A673 (cell line): ENCODE measurements at regions of chr10 and their contacts with region 1.

Region 1: GRCh38 chr10:106795619-106796018 is 368.9 kb downstream of the SORCS1 start:
- DNase-seq: peak; percentile 65
- H3K4me3 ChIP-seq: no peak overlapping the region
- H3K27ac ChIP-seq: no peak overlapping the region
- H3K4me1 ChIP-seq: no peaks in the 10 kb centered on the region
- H3K27me3 ChIP-seq: no peaks in the 10 kb centered on the region
- CTCF ChIP-seq: peak; percentile 78

Region 2: DNA sequence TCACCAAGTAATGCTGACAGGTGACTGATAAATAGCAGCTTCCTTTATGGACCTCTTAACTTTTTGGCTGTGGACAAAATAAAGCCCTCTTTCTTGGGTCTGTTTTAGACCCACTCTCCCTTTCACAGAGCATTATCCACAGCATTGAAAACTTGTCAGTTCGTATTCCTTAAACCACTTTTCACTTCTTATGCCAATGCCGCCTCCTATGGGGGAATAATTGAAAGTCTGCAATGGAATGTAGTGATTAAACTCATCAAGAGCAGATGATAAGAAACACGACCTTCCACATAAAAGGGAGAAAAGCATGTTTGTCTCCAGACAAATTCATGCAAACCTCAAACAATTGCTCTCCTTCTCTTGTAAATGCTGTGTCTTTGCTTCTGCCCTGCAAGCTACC is 215.5 kb after region 1 on chr10:
- CTCF ChIA-PET with region 1: no interaction called
- POLR2A ChIA-PET with region 1: no interaction called
- intact Hi-C with region 1: loop called (anchors 2 kb)
- DNase-seq: peak; percentile 57
- H3K4me3 ChIP-seq: no peak overlapping the region
- H3K27ac ChIP-seq: no peak overlapping the region
- H3K4me1 ChIP-seq: no peaks in the 10 kb centered on the region
- H3K27me3 ChIP-seq: no peaks in the 10 kb centered on the region
- CTCF ChIP-seq: peak; percentile 56

Region 3: DNA sequence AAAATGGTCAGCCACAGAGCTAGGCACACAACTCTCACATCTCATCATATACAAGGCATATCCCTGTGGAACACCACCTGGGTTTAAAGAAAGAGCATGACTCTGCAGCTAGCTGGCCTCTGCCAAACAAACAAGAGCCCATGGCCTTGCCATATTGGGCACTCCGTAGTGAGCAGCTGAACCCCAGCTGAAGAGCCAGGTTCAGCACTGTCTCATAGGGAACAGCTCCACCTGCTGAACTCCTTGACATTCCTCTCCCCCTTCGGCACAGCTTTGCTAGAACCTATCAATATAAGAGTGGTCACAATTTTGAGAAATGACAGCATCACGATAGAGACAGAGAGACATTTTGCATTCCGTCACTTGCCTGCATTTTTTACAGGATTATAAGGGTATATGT is 348.9 kb after region 1 on chr10:
- CTCF ChIA-PET with region 1: no interaction called
- POLR2A ChIA-PET with region 1: no interaction called
- intact Hi-C with region 1: loop called (anchors 5 kb)
- DNase-seq: peak; percentile 30
- H3K4me3 ChIP-seq: no peak overlapping the region
- H3K27ac ChIP-seq: no peak overlapping the region
- H3K4me1 ChIP-seq: no peaks in the 10 kb centered on the region
- H3K27me3 ChIP-seq: no peaks in the 10 kb centered on the region
- CTCF ChIP-seq: peak; percentile 34

Region 4: DNA sequence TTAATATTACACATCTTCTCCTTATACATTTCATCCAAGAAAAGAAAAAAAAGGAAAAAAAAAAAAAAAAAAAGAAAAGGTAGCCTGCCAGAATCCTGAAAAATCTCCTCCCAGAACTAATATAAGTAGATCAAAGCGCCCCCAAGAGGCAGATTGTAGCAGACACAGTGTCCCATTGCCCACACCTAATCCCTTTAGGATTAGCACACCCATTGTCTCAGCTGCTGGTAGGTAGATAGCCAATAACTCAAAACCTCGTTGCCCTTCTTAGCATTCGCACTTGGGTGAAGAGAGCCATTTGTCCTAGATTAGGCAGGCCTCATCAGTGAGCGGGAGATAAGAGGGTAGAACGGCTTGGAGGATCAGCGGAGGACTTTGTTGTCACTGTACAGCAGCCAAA is 469.1 kb after region 1 on chr10:
- CTCF ChIA-PET with region 1: interaction called, 3 read pairs
- POLR2A ChIA-PET with region 1: no interaction called
- intact Hi-C with region 1: loop called (anchors 10 kb)
- DNase-seq: peak; percentile 60
- H3K4me3 ChIP-seq: no peak overlapping the region
- H3K27ac ChIP-seq: no peak overlapping the region
- H3K4me1 ChIP-seq: no peaks in the 10 kb centered on the region
- H3K27me3 ChIP-seq: no peaks in the 10 kb centered on the region
- CTCF ChIP-seq: peak; percentile 76